Caco-2 (cell line): ENCODE measurements at regions of chr3 and their contacts with region 1.

Region 1: GRCh38 chr3:123028233-123028828 is 768 bp upstream of the SEMA5B start:
- DNase-seq: peak in 1 of 2 experiments; percentile 53
- H3K4me3 ChIP-seq: peak overlapping the region; percentile 58
- H3K4me3 Mint-ChIP-seq: peak overlapping the region; percentile 70
- H3K27ac Mint-ChIP-seq: no peak overlapping the region
- H3K4me1 ChIP-seq: no peaks in the 10 kb centered on the region
- H3K4me1 Mint-ChIP-seq: peaks cover 12% of the 10 kb centered on the region
- H3K27me3 ChIP-seq: peaks cover 3% of the 10 kb centered on the region
- H3K27me3 Mint-ChIP-seq: peaks cover 11% of the 10 kb centered on the region
- CTCF ChIP-seq: peak; percentile 16 to 50

Region 2: GRCh38 chr3:122564155-122564912 is 464.0 kb before region 1 on chr3 and contains the starts of genes DTX3L and PARP9:
- CTCF ChIA-PET with region 1: no interaction called
- POLR2A ChIA-PET with region 1: no interaction called
- intact Hi-C with region 1: loop called (anchors 5 kb)
- DNase-seq: peak; percentile 82 to 85
- H3K4me3 ChIP-seq: peak within 1 kb of the TSS; percentile 65
- H3K4me3 Mint-ChIP-seq: peak within 1 kb of the TSS; percentile 83
- H3K27ac Mint-ChIP-seq: peak within 1 kb of the TSS; percentile 86
- H3K4me1 ChIP-seq: 0 out of 2 replicates have a peak, but pooled peaks cover 3% of the 10 kb centered on the region
- H3K4me1 Mint-ChIP-seq: peaks cover 8% of the 10 kb centered on the region
- H3K27me3 ChIP-seq: no peaks in the 10 kb centered on the region
- H3K27me3 Mint-ChIP-seq: no peaks in the 10 kb centered on the region
- CTCF ChIP-seq: no peak
- total RNA-seq, gene DTX3L: 17.3 and 21.9 TPM in 2 replicates
- total RNA-seq, gene PARP9: 15.8 and 16.1 TPM in 2 replicates

Region 3: DNA sequence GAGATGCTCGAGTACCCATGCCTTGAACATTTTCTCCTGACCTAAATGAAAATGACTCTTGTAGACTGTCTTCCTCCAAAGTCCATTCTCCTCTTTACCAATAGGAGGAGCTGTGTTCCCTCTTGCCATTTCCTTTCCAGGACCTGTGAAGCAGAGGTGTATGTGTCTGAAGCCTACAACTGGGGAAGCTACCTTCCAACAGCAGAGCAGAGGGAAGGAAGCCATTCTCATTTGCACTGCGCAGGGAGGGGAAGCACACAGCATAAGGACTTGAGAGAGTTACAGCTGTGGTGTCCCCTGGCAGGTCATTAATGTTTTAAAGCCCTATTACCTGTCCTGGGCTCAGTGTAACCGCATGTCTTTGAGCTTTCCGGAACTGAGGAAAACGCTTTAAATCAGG is 273.4 kb before region 1 on chr3:
- CTCF ChIA-PET with region 1: interaction called, 20 read pairs
- POLR2A ChIA-PET with region 1: no interaction called
- intact Hi-C with region 1: loop called (anchors 1 kb)
- DNase-seq: peak; percentile 71 to 76
- H3K4me3 ChIP-seq: no peak overlapping the region
- H3K4me3 Mint-ChIP-seq: peak overlapping the region; percentile 43
- H3K27ac Mint-ChIP-seq: peak overlapping the region; percentile 93
- H3K4me1 ChIP-seq: peaks cover 43% of the 10 kb centered on the region
- H3K4me1 Mint-ChIP-seq: peaks cover 35% of the 10 kb centered on the region
- H3K27me3 ChIP-seq: no peaks in the 10 kb centered on the region
- H3K27me3 Mint-ChIP-seq: no peaks in the 10 kb centered on the region
- CTCF ChIP-seq: peak; percentile 75 to 82

Region 4: GRCh38 chr3:122942937-122943827 is 85.1 kb before region 1 on chr3:
- CTCF ChIA-PET with region 1: interaction called, 4 read pairs
- POLR2A ChIA-PET with region 1: no interaction called
- intact Hi-C with region 1: loop called (anchors 1 kb)
- DNase-seq: peak; percentile 68 to 85
- H3K4me3 ChIP-seq: no peak overlapping the region
- H3K4me3 Mint-ChIP-seq: no peak overlapping the region
- H3K27ac Mint-ChIP-seq: peak overlapping the region; percentile 16
- H3K4me1 ChIP-seq: no peaks in the 10 kb centered on the region; the same call in 1 of the 2 replicates
- H3K4me1 Mint-ChIP-seq: peaks cover 7% of the 10 kb centered on the region
- H3K27me3 ChIP-seq: no peaks in the 10 kb centered on the region
- H3K27me3 Mint-ChIP-seq: no peaks in the 10 kb centered on the region
- CTCF ChIP-seq: peak; percentile 77 to 92

Region 5: DNA sequence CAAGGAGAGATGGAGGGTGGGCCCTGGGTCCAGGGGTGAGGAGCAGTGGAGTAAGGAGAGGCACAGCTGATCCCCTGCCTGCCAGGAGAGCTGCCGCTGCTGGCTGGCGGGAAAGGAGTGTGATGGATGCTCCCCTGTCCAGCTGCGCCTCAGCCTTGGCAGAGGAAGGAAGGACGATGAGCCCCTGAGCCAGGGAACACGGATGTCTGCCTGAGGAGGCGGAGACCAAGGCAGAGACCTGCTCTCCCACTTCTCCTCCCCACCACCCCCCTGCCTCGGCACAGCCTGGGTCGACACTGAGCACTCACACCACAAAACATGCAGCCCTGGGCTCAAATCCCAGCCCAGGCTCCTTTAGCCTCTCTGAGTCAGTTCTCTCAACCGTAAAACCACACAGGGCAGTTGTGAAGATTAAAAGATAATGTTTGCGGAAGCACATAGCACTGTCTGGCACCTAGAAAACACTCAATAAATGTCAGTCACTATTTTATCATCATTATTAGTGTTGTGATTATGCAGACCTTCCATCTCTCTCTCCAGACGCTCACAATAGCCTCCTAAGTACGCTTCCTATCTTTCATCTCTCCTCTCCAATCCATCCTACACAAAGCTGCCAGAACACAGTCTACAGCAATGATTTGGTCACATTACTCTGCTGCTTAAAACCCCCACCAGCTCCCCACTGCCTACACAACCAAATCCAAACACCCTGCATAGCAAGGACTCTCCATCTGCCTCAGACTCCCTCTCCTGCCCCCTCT is 53.0 kb before region 1 on chr3:
- CTCF ChIA-PET with region 1: no interaction called
- POLR2A ChIA-PET with region 1: no interaction called
- intact Hi-C with region 1: no loop called
- DNase-seq: no peak
- H3K4me3 ChIP-seq: no peak overlapping the region
- H3K4me3 Mint-ChIP-seq: no peak overlapping the region
- H3K27ac Mint-ChIP-seq: no peak overlapping the region
- H3K4me1 ChIP-seq: peaks cover 4% of the 10 kb centered on the region; the same call in 1 of the 2 replicates
- H3K4me1 Mint-ChIP-seq: peaks cover 7% of the 10 kb centered on the region
- H3K27me3 ChIP-seq: no peaks in the 10 kb centered on the region
- H3K27me3 Mint-ChIP-seq: no peaks in the 10 kb centered on the region
- CTCF ChIP-seq: no peak

Region 6: GRCh38 chr3:123258811-123259420 is 230.6 kb after region 1 on chr3:
- CTCF ChIA-PET with region 1: interaction called, 5 read pairs
- POLR2A ChIA-PET with region 1: no interaction called
- intact Hi-C with region 1: loop called (anchors 5 kb)
- DNase-seq: peak in 1 of 2 experiments; percentile 31
- H3K4me3 ChIP-seq: no peak overlapping the region
- H3K4me3 Mint-ChIP-seq: no peak overlapping the region
- H3K27ac Mint-ChIP-seq: no peak overlapping the region
- H3K4me1 ChIP-seq: no peaks in the 10 kb centered on the region
- H3K4me1 Mint-ChIP-seq: no peaks in the 10 kb centered on the region
- H3K27me3 ChIP-seq: no peaks in the 10 kb centered on the region
- H3K27me3 Mint-ChIP-seq: no peaks in the 10 kb centered on the region
- CTCF ChIP-seq: peak; percentile 47 to 52